ENCODE measurements at regions of chr10 and their contacts with region 1.

Region 1: GRCh38 chr10:110497438-110498086 is at the start of gene DUSP5:
- DNase-seq: peak; percentile 82 to 91
- H3K4me3 ChIP-seq: peak within 1 kb of the TSS; percentile 98
- H3K27ac ChIP-seq: peak within 1 kb of the TSS; percentile 87
- H3K4me1 ChIP-seq: peaks cover 24% of the 10 kb centered on the region
- H3K27me3 ChIP-seq: no peaks in the 10 kb centered on the region
- CTCF ChIP-seq: no peak
- total RNA-seq, gene DUSP5: 14.2 and 19.0 TPM in 2 replicates

Region 2: DNA sequence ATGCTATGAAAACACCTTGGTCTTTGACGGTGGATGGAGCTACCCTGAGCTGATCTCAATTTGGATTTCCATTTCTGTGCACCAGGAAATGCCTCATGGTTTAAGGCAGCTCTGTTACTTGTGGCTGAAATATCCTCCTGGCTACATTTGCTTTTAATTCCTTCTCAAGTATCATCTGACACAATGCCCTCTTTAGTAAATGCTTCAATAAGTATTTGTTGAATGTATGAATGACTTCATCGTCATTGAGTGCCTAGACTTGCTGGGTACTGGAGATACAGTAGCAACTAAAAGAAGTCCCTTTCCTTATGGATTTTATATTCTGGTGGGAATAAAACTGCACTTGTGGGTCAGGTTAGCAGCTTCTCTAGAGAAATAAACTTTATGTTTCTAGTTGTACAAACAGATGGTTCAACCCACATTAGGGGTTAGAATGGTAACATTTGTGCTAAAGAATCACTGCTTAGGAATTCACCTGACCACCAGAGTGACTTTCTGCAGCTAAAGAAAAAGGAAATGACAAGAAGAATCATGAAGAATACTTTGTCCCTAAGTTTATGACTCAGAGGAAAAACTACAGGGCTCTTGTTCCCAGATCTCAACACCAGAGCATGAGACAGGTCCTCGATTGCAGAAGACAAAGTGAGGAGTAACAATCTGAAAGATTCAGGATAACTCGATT is 171.1 kb before region 1 on chr10:
- CTCF ChIA-PET with region 1: no interaction called
- POLR2A ChIA-PET with region 1: no interaction called
- intact Hi-C with region 1: loop called (anchors 5 kb)
- DNase-seq: peak in 1 of 2 experiments; percentile 89
- H3K4me3 ChIP-seq: peak overlapping the region; percentile 20; the same call in 1 of the 2 replicates
- H3K27ac ChIP-seq: peak overlapping the region; percentile 99
- H3K4me1 ChIP-seq: peaks cover 62% of the 10 kb centered on the region
- H3K27me3 ChIP-seq: no peaks in the 10 kb centered on the region
- CTCF ChIP-seq: no peak

Region 3: GRCh38 chr10:110368002-110368401 is 129.6 kb before region 1 on chr10:
- CTCF ChIA-PET with region 1: no interaction called
- POLR2A ChIA-PET with region 1: no interaction called
- intact Hi-C with region 1: no loop called
- DNase-seq: no peak
- H3K4me3 ChIP-seq: no peak overlapping the region
- H3K27ac ChIP-seq: peak overlapping the region; percentile 62; the same call in 1 of the 2 replicates
- H3K4me1 ChIP-seq: peaks cover 64% of the 10 kb centered on the region
- H3K27me3 ChIP-seq: no peaks in the 10 kb centered on the region
- CTCF ChIP-seq: no peak

Region 4: DNA sequence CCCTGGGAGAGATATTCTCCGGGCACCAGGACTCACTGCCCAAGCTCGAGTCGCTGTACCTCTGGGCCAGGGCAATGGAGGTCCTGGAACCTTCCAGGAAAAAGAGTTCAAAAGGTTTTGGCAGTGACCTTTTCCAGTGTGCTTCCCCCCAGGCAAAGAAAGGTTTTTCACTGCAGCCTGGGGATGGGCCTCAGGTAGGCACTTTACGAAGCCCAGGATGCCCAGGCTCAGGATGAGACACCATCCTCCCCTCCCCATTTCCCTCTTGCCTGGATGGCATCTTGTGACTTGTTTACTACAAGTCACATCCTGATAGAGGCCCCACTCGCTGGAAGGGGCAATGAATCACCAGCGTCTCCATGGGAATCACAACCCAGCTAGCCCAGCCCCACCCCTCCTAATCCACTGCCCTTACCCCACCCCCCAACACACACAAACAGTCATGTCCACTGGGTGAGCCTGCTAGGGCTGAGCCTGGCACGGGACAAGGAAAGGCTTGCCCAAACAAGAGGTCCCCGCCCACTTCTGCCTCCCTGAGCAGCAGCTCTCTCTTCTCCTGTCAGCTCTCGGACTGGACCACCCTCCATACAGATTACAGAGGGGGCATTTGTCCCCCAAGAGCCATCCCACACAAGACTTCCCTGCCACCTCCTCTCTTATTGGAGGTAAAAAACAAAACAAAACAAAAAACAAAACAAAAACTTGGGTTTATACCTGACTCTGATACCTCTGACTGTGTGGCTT is 99.0 kb before region 1 on chr10:
- CTCF ChIA-PET with region 1: interaction called, 3 read pairs
- POLR2A ChIA-PET with region 1: interaction called, 5 read pairs
- intact Hi-C with region 1: loop called (anchors 1 kb)
- DNase-seq: peak; percentile 88 to 94
- H3K4me3 ChIP-seq: peak overlapping the region; percentile 41; the same call in 1 of the 2 replicates
- H3K27ac ChIP-seq: peak overlapping the region; percentile 100
- H3K4me1 ChIP-seq: peaks cover 71% of the 10 kb centered on the region
- H3K27me3 ChIP-seq: no peaks in the 10 kb centered on the region
- CTCF ChIP-seq: no peak

Region 5: GRCh38 chr10:110530131-110530831 is 32.7 kb after region 1 on chr10:
- CTCF ChIA-PET with region 1: no interaction called
- POLR2A ChIA-PET with region 1: interaction called, 3 read pairs
- intact Hi-C with region 1: loop called (anchors 1 kb)
- DNase-seq: peak; percentile 81
- H3K4me3 ChIP-seq: peak overlapping the region; percentile 38; the same call in 1 of the 2 replicates
- H3K27ac ChIP-seq: peak overlapping the region; percentile 88
- H3K4me1 ChIP-seq: peaks cover 49% of the 10 kb centered on the region
- H3K27me3 ChIP-seq: no peaks in the 10 kb centered on the region
- CTCF ChIP-seq: no peak

Region 6: GRCh38 chr10:110567201-110568054 is 69.9 kb after region 1 on chr10 and contains the start of gene SMC3:
- CTCF ChIA-PET with region 1: no interaction called
- POLR2A ChIA-PET with region 1: no interaction called
- intact Hi-C with region 1: loop called (anchors 2 kb)
- DNase-seq: peak; percentile 74 to 82
- H3K4me3 ChIP-seq: peak within 1 kb of the TSS; percentile 90
- H3K27ac ChIP-seq: peak within 1 kb of the TSS; percentile 86
- H3K4me1 ChIP-seq: peaks cover 7% of the 10 kb centered on the region
- H3K27me3 ChIP-seq: no peaks in the 10 kb centered on the region
- CTCF ChIP-seq: no peak
- total RNA-seq, gene SMC3: 22.1 and 31.2 TPM in 2 replicates

Region 7: DNA sequence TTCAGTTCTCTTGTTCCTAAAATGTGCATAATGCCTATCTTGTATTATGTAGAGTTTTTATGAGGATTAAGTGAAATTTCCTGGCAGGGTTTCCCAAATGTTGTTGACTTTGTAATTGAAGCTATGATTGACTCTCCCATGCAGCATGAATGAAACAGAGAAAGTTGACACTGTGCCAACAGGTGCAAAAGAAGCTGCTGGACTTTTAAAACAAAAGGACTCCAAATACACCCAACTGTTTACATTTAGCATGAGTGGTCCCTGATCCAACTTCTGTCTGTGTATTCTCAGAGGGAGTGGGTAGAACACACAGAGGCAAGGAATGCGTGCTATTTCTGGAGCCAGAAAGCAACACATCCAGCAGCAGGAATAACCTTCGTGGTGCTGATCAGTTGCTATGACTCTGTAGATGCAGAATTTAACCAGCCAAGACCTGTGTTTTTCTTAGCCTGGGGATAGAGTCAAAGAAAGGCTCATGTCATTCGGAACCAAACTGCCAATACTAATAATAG is 132.2 kb after region 1 on chr10:
- CTCF ChIA-PET with region 1: no interaction called
- POLR2A ChIA-PET with region 1: no interaction called
- intact Hi-C with region 1: no loop called
- DNase-seq: peak; percentile 56 to 93
- H3K4me3 ChIP-seq: no peak overlapping the region
- H3K27ac ChIP-seq: no peak overlapping the region
- H3K4me1 ChIP-seq: peaks cover 10% of the 10 kb centered on the region
- H3K27me3 ChIP-seq: no peaks in the 10 kb centered on the region
- CTCF ChIP-seq: no peak

Measured in PC-9 (cell line).